AG04450 (cell line): ENCODE measurements at regions of chr15 and their contacts with region 1.

Region 1: GRCh38 chr15:66851226-66852071 is 149.4 kb downstream of the SMAD6 start:
- DNase-seq: peak; percentile 45
- H3K4me3 ChIP-seq: no peak overlapping the region
- H3K27ac ChIP-seq: no peak overlapping the region
- H3K27me3 ChIP-seq: no peaks in the 10 kb centered on the region
- CTCF ChIP-seq: peak; percentile 96

Region 2: DNA sequence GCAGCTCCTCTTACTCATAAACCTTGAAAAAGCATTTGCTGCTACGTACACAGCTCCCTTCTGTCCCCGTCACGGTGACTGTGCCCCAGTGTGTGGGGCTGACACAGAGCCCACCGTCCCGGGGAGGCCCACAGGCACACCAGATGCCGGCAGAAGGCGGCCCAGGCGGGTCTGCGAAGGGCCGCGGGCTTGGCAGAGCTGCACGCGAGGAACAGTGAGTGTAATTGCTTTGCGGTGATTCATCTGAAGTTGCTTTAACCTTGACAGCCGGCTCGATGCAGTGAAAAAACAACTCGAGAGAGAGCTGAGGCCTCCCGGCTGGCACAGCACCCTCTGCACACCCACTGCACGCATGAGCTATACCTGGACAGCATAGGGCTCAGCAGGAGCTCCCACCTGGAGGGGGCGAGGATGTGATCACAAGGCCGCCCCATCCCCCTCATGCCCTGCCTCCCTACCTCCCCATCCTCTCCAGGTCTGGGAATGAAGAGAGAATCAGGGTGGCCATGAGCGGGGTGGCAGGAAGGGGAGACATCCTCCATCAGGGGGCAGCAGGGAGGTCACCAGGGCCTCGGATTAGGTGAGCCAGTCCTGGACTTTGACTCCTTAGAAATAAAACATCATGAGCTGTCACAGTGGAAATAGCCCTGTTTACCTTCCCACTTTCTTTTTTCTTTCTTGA is 770.6 kb before region 1 on chr15:
- CTCF ChIA-PET with region 1: no interaction called
- POLR2A ChIA-PET with region 1: no interaction called
- DNase-seq: peak; percentile 30
- H3K4me3 ChIP-seq: no peak overlapping the region
- H3K27ac ChIP-seq: no peak overlapping the region
- H3K27me3 ChIP-seq: peaks cover 33% of the 10 kb centered on the region
- CTCF ChIP-seq: no peak

Region 3: GRCh38 chr15:66603301-66604179 is 247.9 kb before region 1 on chr15:
- CTCF ChIA-PET with region 1: interaction called, 52 read pairs
- POLR2A ChIA-PET with region 1: no interaction called
- DNase-seq: peak; percentile 39
- H3K4me3 ChIP-seq: no peak overlapping the region
- H3K27ac ChIP-seq: no peak overlapping the region
- H3K27me3 ChIP-seq: peaks cover 10% of the 10 kb centered on the region
- CTCF ChIP-seq: peak; percentile 88

Region 4: DNA sequence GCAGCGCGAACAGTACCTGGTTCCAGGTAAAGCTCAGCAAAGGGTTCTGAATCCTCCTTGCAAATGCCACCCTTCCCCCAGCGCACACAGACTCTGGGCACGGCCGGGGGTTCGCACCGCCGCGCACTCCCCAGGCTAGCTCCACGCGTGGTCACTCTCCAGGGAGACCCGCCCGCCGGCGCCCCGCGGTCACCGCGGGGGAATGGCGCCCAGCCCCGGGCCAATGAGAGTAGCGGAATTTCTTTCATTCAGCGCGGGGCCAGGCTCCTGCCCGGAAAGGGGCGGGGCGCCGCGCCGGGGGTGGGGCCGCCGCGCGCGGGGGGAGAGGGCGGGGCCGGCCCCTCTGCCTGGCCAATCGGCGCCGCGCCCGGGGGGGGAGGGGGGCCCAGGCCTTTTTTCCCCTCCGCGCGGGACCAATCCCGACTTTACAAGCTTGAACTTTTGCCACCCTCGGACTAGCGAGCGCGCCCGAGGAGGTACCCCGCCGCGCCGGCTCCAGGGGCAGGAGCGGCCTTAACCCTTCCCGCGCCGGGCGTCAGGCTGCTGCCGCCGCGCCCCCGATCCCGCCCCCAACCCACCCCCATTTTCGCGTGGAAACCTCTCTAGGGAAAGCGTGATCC is 150.5 kb before region 1 on chr15:
- CTCF ChIA-PET with region 1: interaction called, 63 read pairs
- POLR2A ChIA-PET with region 1: interaction called, 23 read pairs
- DNase-seq: peak; percentile 84
- H3K4me3 ChIP-seq: peak overlapping the region; percentile 67
- H3K27ac ChIP-seq: no peak overlapping the region
- H3K27me3 ChIP-seq: no peaks in the 10 kb centered on the region
- CTCF ChIP-seq: no peak

Region 5: GRCh38 chr15:66714543-66714981 is 136.9 kb before region 1 on chr15:
- CTCF ChIA-PET with region 1: interaction called, 16 read pairs
- POLR2A ChIA-PET with region 1: interaction called, 12 read pairs
- DNase-seq: no peak
- H3K4me3 ChIP-seq: no peak overlapping the region
- H3K27ac ChIP-seq: no peak overlapping the region
- H3K27me3 ChIP-seq: no peaks in the 10 kb centered on the region
- CTCF ChIP-seq: no peak

Region 6: DNA sequence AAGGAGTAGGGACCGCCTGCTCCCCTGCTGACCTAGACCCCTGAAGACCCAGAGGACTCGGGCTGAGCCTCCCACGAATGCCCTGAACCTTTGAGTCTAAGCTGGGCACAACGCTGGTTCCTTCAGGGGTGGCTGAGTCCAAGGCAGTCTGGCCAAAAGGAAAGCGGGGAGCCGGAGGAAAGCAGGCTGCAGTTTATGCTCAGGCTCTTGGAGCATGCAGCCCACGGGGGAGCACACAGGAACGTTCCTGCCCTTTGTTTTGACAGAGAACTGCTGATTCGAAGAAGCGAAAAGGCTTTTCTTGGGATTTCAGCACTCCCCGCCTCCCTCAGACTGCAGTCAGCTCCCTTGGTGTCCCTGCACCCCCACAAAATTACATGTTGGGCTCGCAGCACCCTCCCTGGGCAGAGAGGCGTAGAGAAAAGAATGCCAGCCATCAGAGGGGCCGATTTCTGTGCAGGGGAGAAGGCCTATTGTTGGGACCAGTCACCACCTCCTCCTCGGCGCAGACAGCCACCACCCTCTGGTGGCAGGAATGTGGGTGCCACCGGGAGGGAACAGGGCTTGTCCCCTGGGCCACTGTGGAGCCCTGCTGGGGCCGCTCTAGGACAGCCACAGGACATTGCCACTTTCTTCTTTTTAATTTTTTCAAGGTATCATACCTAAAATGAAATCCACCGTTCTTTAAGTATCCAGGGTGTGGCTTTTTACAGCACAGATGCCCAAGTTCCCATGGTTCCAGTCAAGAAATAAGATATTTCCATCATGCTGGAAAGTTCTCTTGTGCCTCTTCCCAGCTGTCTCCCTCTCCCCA is 77.2 kb before region 1 on chr15:
- CTCF ChIA-PET with region 1: interaction called, 38 read pairs
- POLR2A ChIA-PET with region 1: no interaction called
- DNase-seq: no peak
- H3K4me3 ChIP-seq: no peak overlapping the region
- H3K27ac ChIP-seq: peak overlapping the region; percentile 47
- H3K27me3 ChIP-seq: no peaks in the 10 kb centered on the region
- CTCF ChIP-seq: peak; percentile 97

Region 7: GRCh38 chr15:66789029-66790025 is 62.1 kb before region 1 on chr15:
- CTCF ChIA-PET with region 1: interaction called, 28 read pairs
- POLR2A ChIA-PET with region 1: interaction called, 4 read pairs
- DNase-seq: peak; percentile 78
- H3K4me3 ChIP-seq: no peak overlapping the region
- H3K27ac ChIP-seq: peak overlapping the region; percentile 87
- H3K27me3 ChIP-seq: no peaks in the 10 kb centered on the region
- CTCF ChIP-seq: peak; percentile 71

Region 8: GRCh38 chr15:66862878-66863335 is 11.5 kb after region 1 on chr15:
- CTCF ChIA-PET with region 1: interaction called, 44 read pairs
- POLR2A ChIA-PET with region 1: no interaction called
- DNase-seq: peak; percentile 62
- H3K4me3 ChIP-seq: no peak overlapping the region
- H3K27ac ChIP-seq: no peak overlapping the region
- H3K27me3 ChIP-seq: no peaks in the 10 kb centered on the region
- CTCF ChIP-seq: peak; percentile 96